Cardiac septum (tissue), 1 donor: ENCODE measurements at regions of chr1 and their contacts with region 1.

Region 1: GRCh38 chr1:153990468-153991150 is at the start of gene RPS27:
- DNase-seq: peak; percentile 90
- total RNA-seq, gene RPS27: 712 TPM

Region 2: GRCh38 chr1:153677718-153678505 is 312.7 kb before region 1 on chr1:
- intact Hi-C with region 1: loop called (anchors 2 kb)
- DNase-seq: no peak

Region 3: GRCh38 chr1:153796791-153797659 is 193.6 kb before region 1 on chr1:
- intact Hi-C with region 1: loop called (anchors 1 kb)
- DNase-seq: peak; percentile 83

Region 4: DNA sequence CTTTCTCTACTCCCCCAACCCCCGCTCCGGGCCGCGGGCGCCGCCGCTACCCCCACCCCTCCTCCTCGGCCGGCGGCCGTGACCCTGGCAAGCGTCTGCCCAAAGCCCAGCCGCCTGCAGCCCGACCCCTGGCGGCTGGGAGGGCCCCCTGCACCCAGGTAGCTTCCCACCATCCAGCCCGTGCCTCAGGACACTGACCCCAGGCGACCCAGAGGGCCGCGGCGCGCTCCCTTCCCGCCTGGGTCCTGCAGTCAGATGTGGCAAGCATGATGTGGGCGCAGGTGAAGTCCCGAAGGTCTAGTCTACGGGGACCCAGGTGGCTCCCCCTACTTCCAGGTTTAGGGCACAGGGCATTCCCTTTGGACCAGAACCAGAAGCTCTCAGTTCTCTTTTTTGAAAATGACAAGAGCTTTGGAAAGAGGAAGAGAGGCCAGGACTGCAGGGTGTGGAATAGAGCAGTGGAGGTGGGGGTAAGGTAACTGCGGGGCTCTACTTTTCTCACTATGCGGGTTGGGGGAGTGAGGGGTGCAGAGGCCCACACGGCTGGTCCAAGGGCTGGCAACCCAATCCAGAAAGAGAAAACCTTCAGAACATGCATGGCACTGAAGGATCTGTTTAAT is 43.9 kb before region 1 on chr1 and contains the start of gene DENND4B:
- intact Hi-C with region 1: loop called (anchors 5 kb)
- DNase-seq: peak; percentile 93
- total RNA-seq, gene DENND4B: 42.7 TPM

Region 5: DNA sequence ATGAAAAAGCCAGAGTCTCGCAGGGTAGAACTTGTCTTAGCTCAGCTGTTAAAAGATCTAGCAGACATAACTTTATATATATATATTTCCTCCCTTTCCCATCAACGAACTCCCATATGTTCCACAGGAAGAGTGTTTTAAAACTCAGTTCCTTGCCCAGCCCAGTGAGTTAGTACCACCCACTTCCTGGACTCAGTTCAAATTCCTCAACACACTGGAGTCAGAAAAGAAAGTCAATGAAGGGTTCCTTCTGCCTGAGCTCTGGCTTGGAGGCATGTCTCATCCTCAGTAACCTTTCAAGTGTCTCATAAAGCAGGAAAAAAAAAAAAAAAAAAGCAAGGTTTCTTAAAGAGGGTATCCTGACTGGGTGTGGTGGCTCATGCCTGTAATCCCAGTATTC is 185.7 kb after region 1 on chr1:
- intact Hi-C with region 1: loop called (anchors 10 kb)
- DNase-seq: no peak

Region 6: GRCh38 chr1:154272217-154272998 is 281.8 kb after region 1 on chr1 and contains the start of gene HAX1:
- intact Hi-C with region 1: loop called (anchors 10 kb)
- DNase-seq: peak; percentile 97
- total RNA-seq, gene HAX1: 132 TPM